Caco-2 (cell line): ENCODE measurements at regions of chr9 and their contacts with region 1.

Region 1: GRCh38 chr9:1100945-1101344 is 50.8 kb downstream of the DMRT2 start:
- DNase-seq: peak; percentile 56 to 64
- H3K4me3 ChIP-seq: no peak overlapping the region
- H3K4me3 Mint-ChIP-seq: no peak overlapping the region
- H3K27ac Mint-ChIP-seq: no peak overlapping the region
- H3K4me1 ChIP-seq: no peaks in the 10 kb centered on the region
- H3K4me1 Mint-ChIP-seq: no peaks in the 10 kb centered on the region
- H3K27me3 ChIP-seq: no peaks in the 10 kb centered on the region
- H3K27me3 Mint-ChIP-seq: peaks cover 15% of the 10 kb centered on the region
- CTCF ChIP-seq: peak; percentile 57 to 85

Region 2: GRCh38 chr9:1071730-1072129 is 29.2 kb before region 1 on chr9:
- CTCF ChIA-PET with region 1: no interaction called
- POLR2A ChIA-PET with region 1: no interaction called
- intact Hi-C with region 1: no loop called
- DNase-seq: no peak
- H3K4me3 ChIP-seq: no peak overlapping the region
- H3K4me3 Mint-ChIP-seq: no peak overlapping the region
- H3K27ac Mint-ChIP-seq: no peak overlapping the region
- H3K4me1 ChIP-seq: no peaks in the 10 kb centered on the region
- H3K4me1 Mint-ChIP-seq: no peaks in the 10 kb centered on the region
- H3K27me3 ChIP-seq: no peaks in the 10 kb centered on the region
- H3K27me3 Mint-ChIP-seq: peaks cover 10% of the 10 kb centered on the region
- CTCF ChIP-seq: no peak

Region 3: GRCh38 chr9:1222511-1222910 is 121.6 kb after region 1 on chr9:
- CTCF ChIA-PET with region 1: no interaction called
- POLR2A ChIA-PET with region 1: no interaction called
- intact Hi-C with region 1: no loop called
- DNase-seq: no peak
- H3K4me3 ChIP-seq: no peak overlapping the region
- H3K4me3 Mint-ChIP-seq: no peak overlapping the region
- H3K27ac Mint-ChIP-seq: no peak overlapping the region
- H3K4me1 ChIP-seq: no peaks in the 10 kb centered on the region
- H3K4me1 Mint-ChIP-seq: no peaks in the 10 kb centered on the region
- H3K27me3 ChIP-seq: no peaks in the 10 kb centered on the region
- H3K27me3 Mint-ChIP-seq: no peaks in the 10 kb centered on the region
- CTCF ChIP-seq: no peak

Region 4: GRCh38 chr9:1337161-1337560 is 236.2 kb after region 1 on chr9:
- CTCF ChIA-PET with region 1: no interaction called
- POLR2A ChIA-PET with region 1: no interaction called
- intact Hi-C with region 1: loop called (anchors 1 kb)
- DNase-seq: peak in 1 of 2 experiments; percentile 15
- H3K4me3 ChIP-seq: no peak overlapping the region
- H3K4me3 Mint-ChIP-seq: no peak overlapping the region
- H3K27ac Mint-ChIP-seq: no peak overlapping the region
- H3K4me1 ChIP-seq: no peaks in the 10 kb centered on the region
- H3K4me1 Mint-ChIP-seq: no peaks in the 10 kb centered on the region
- H3K27me3 ChIP-seq: no peaks in the 10 kb centered on the region
- H3K27me3 Mint-ChIP-seq: peaks cover 6% of the 10 kb centered on the region
- CTCF ChIP-seq: no peak

Region 5: DNA sequence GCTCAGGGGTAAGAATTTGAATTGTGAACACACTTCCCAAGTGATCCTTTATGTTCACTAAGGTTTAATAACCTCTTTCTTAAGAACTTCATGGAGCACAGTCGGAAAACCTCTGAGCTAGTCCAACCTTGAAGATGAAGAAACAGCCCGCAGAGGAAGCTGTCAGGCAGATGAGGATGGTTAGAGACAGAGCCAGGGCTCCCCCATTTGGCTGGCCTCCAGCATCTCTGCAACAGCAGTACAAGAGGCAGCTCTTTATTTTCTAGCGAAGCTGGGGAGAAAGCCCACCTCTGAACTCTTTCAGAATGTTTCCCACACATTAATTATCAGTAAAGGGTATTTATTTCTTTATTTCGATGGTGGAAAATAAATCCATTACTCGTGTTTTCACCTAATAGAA is 300.0 kb after region 1 on chr9:
- CTCF ChIA-PET with region 1: interaction called, 10 read pairs
- POLR2A ChIA-PET with region 1: no interaction called
- intact Hi-C with region 1: no loop called
- DNase-seq: peak; percentile 3 to 34
- H3K4me3 ChIP-seq: no peak overlapping the region
- H3K4me3 Mint-ChIP-seq: no peak overlapping the region
- H3K27ac Mint-ChIP-seq: no peak overlapping the region
- H3K4me1 ChIP-seq: no peaks in the 10 kb centered on the region
- H3K4me1 Mint-ChIP-seq: no peaks in the 10 kb centered on the region
- H3K27me3 ChIP-seq: no peaks in the 10 kb centered on the region
- H3K27me3 Mint-ChIP-seq: peaks cover 14% of the 10 kb centered on the region
- CTCF ChIP-seq: peak in 1 of 2 experiments; percentile 36

Region 6: GRCh38 chr9:1429297-1429696 is 328.4 kb after region 1 on chr9:
- CTCF ChIA-PET with region 1: no interaction called
- POLR2A ChIA-PET with region 1: no interaction called
- intact Hi-C with region 1: loop called (anchors 1 kb)
- DNase-seq: peak; percentile 31 to 43
- H3K4me3 ChIP-seq: no peak overlapping the region
- H3K4me3 Mint-ChIP-seq: no peak overlapping the region
- H3K27ac Mint-ChIP-seq: no peak overlapping the region
- H3K4me1 ChIP-seq: no peaks in the 10 kb centered on the region
- H3K4me1 Mint-ChIP-seq: no peaks in the 10 kb centered on the region
- H3K27me3 ChIP-seq: no peaks in the 10 kb centered on the region
- H3K27me3 Mint-ChIP-seq: peaks cover 7% of the 10 kb centered on the region
- CTCF ChIP-seq: peak; percentile 21 to 55

Region 7: DNA sequence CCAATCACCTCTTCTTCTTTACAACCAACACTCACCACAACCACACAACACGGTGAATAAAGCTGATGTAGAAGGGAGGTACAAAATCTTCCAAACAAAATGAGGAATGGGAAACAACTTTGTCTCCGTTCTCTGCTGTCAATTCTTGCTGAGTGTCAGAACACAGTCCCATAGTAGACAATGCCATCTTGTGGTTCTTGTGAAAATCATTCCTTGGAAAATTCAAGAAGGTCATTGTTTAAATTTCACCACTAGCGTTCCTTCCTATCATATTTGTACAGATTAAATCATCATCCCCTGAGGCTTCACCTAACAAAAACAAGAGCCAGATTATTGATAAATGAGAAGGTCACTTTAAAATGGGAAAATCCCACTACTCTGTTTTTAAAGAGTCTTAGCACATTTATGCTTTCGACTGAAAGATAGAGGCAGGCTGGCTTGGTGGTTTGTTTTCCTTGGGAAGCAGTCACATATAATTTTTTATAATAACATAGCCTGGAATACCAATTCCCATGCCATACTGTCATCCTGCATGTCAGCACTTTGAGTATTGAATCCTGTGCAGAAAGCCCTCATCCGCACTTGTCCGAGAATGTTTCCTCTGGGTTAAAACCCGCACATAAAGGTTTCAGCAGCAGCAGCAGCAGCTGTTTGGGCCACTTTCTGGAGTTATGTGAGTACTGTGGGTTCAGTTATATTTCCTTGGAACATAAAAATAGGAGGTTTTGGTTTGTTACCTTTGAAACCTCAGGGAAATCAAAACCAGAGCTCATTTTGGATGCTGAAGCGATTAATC is 519.2 kb after region 1 on chr9:
- CTCF ChIA-PET with region 1: no interaction called
- POLR2A ChIA-PET with region 1: no interaction called
- intact Hi-C with region 1: loop called (anchors 1 kb)
- DNase-seq: peak in 1 of 2 experiments; percentile 1
- H3K4me3 ChIP-seq: no peak overlapping the region
- H3K4me3 Mint-ChIP-seq: no peak overlapping the region
- H3K27ac Mint-ChIP-seq: no peak overlapping the region
- H3K4me1 ChIP-seq: no peaks in the 10 kb centered on the region
- H3K4me1 Mint-ChIP-seq: peaks cover 5% of the 10 kb centered on the region
- H3K27me3 ChIP-seq: no peaks in the 10 kb centered on the region
- H3K27me3 Mint-ChIP-seq: peaks cover 19% of the 10 kb centered on the region
- CTCF ChIP-seq: peak; percentile 12 to 30